AG04450 (cell line): ENCODE measurements at regions of chr5 and their contacts with region 1.

Region 1: DNA sequence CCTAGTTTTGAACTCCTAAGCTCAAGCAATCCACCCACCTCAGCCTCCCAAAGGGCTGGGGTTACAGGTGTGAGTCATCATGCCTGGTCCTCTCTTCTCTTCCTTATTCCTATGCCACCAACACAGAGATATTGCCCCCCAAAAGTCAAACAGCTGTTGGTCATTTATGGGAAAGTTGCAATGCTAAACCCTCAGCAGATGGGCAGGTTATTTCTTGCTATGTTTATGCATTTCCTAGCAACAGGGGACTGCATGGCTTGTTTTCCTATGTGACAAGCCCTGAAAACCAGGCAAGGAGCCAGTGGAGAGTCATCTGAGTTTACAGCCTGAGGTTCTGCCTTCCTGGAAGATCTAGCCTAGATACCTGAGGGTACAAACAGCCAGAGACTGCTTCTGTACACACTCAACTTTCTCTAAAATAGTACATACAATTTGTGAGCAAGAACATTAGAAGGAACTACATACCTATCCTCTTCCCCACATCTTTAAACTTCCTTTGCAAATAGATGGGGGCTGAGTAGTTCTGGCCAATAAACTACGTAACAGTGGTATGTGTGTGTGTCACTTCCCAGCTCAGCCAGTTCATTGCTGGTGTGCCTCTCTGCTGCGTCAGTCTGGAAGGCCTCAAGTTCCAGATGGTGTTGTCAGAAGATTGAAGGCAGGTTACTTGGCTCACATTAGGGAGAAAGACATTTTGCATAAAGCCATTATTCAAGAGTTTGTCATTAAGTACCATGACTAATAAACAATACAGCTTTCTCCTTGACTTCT is 65.4 kb downstream of the CSNK1A1 start:
- DNase-seq: peak; percentile 98
- H3K4me3 ChIP-seq: no peak overlapping the region
- H3K27ac ChIP-seq: peak overlapping the region; percentile 99
- H3K27me3 ChIP-seq: no peaks in the 10 kb centered on the region
- CTCF ChIP-seq: no peak

Region 2: DNA sequence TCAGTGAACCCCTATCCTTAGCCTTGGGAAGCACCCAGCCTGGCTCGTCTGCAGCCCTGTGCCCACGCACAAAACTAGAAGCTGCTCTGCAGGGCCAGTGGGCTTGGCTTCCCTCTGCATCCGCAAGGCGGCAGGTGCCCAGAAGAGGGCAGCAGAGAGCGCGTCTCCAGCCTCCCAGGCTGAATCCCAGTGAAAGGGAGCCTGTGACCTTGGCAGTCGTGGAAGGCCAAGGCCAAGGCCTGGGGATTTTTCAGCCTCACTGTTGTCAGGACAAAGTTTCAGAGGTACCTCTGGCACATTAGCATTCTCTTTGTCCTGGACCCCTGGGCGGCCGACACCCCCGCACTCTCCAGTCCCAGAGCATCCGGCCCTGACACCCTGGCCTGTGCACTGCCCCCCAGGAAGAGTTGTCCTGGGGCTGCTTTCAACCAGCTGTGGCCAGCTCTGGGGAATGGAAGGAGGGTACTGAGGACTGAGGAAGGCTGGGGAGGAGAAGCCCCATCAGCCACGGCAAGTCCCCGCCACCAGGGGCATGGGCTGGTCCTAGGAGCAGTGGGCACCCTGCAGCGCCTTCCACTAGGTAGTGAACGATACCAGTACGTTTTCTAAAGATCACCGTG is 43.2 kb before region 1 on chr5:
- CTCF ChIA-PET with region 1: interaction called, 5 read pairs
- POLR2A ChIA-PET with region 1: interaction called, 16 read pairs
- DNase-seq: peak; percentile 44
- H3K4me3 ChIP-seq: no peak overlapping the region
- H3K27ac ChIP-seq: peak overlapping the region; percentile 0
- H3K27me3 ChIP-seq: peaks cover 2% of the 10 kb centered on the region
- CTCF ChIP-seq: peak; percentile 93

Region 3: DNA sequence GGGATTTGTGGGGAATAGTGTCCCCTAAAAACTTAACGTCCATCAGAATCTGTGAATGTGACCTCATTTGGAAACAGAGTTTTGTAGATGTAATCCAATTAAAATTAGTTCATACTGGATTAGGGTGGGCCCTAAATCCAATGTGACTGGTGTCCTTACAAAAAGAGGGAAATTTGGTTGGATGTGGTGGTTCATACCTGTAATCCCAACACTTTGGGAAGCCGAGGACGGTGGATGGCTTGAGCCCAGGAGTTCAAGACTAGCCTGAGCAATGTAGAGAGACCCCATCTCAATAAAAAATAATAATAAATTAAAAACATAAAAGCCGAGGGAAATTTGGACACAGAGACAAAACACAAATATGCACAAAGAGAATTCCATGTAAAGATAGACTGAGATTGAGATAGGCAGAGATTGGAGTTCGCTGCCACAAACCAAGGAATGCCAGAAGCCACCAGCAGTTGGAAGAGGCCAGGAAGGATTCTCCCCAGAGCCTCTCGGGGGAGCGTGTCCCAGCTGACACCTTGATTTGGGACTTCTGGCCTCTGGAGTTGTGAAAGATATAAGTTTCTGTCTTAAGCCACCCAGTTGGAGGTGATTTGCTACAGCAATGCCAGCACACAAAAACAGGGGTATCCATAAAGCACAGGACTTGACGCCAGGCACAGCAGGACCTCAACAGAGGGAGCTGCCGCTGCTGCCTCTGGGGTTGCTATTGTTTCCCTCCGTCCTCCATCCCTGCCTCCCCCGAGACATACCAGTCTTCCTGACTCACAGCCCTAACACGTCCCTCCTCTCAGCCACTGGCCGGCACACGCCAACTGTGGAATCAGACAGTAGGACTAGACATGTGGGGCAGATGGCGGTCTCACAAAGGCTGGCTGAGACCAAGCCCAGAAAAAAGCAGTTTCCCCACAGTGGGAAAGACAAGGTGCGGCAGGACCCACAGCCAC is 32.9 kb before region 1 on chr5:
- CTCF ChIA-PET with region 1: no interaction called
- POLR2A ChIA-PET with region 1: interaction called, 11 read pairs
- DNase-seq: peak; percentile 78
- H3K4me3 ChIP-seq: no peak overlapping the region
- H3K27ac ChIP-seq: peak overlapping the region; percentile 89
- H3K27me3 ChIP-seq: no peaks in the 10 kb centered on the region
- CTCF ChIP-seq: peak; percentile 20; the same call in 1 of the 2 replicates

Region 4: DNA sequence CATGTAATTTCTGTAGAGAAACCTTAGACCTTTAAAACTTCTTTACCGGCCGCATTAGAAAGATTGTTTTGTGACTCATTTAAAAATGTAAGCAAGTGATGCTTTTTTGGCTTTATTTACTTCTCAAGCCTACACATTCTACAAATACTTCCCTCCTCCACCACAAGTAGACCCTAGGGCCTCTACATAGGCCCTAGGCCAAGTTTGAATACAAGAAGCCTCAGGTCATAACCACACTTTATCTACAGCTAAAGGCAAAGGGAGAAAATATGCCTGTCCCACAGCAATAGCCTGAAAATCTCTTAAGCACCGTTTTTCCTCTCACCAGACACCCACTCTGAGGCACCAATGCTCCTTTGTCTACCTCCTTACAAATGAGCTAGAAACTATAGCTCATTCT is 11.5 kb after region 1 on chr5:
- CTCF ChIA-PET with region 1: no interaction called
- POLR2A ChIA-PET with region 1: interaction called, 11 read pairs
- DNase-seq: peak; percentile 91
- H3K4me3 ChIP-seq: no peak overlapping the region
- H3K27ac ChIP-seq: peak overlapping the region; percentile 85
- H3K27me3 ChIP-seq: no peaks in the 10 kb centered on the region
- CTCF ChIP-seq: no peak; the same call in 1 of the 2 replicates

Region 5: DNA sequence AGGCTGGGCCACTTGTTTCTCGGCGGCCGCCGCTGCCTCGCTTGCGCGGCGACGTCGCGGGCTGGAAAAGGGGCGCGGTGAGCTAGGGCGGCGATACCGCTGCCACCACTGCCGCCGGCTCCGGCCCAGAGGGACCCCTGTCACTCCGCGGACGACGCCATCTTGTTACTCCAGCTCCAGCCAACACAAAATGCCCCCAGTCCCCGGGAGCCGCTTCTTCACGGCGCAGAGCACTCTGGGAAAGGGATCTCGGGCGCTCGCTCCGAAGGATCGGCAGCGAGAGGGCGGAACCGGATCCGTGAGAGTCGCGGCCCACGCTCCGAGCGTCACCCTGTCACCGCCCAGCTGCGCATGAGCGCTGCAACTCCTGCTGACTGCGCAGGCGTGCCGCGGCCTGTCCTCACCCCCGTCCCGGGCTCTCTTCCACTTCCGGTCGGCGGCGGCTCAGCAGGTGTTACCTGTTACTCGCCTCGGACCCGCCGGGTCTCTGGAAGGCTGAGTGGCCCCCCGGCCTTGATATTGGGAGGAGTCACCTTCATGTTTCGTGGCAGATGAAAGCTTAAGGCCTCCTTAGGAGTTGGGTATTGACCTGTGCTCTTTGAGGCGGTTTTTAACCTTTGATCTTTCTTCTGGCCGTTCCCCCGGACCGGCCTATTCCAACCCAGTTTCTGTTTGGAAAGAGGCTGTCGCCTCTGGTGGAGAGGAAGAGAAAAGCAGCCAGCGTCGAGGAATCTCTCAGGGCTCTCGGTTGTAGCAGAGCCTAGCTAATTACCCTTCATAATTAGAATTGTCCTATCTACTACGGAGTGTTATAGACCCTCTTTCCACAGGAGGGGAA is 65.6 kb after region 1 on chr5 and contains the start of gene CSNK1A1:
- CTCF ChIA-PET with region 1: interaction called, 3 read pairs
- POLR2A ChIA-PET with region 1: interaction called, 15 read pairs
- DNase-seq: peak; percentile 97
- H3K4me3 ChIP-seq: peak within 1 kb of the TSS; percentile 96
- H3K27ac ChIP-seq: peak within 1 kb of the TSS; percentile 91
- H3K27me3 ChIP-seq: no peaks in the 10 kb centered on the region
- CTCF ChIP-seq: peak; percentile 86
- polyA plus RNA-seq, gene CSNK1A1: 260 and 329 TPM in 2 replicates

Region 6: DNA sequence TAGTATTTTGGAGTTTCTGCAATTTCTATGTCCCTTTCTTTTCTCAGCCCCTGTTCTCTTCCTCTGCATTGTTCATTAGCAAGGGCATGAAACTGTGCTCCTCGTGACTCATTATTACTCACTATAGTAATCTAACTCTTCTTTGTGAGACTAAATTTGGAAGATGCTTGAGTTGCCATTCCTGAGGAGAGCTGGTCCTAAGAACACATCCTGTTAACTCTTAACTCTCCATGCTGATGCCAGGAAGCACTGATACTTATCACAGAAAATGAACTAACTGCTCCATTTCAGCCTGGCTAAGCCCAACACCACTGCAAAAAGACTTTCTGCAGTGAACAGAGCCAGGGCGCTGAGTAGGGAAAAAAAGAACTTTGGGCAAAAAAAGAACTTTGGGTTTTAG is 76.0 kb after region 1 on chr5:
- CTCF ChIA-PET with region 1: no interaction called
- POLR2A ChIA-PET with region 1: interaction called, 19 read pairs
- DNase-seq: peak; percentile 84
- H3K4me3 ChIP-seq: no peak overlapping the region; the same call in 1 of the 2 replicates
- H3K27ac ChIP-seq: peak overlapping the region; percentile 90
- H3K27me3 ChIP-seq: no peaks in the 10 kb centered on the region
- CTCF ChIP-seq: no peak

Region 7: GRCh38 chr5:149576021-149576420 is 90.2 kb after region 1 on chr5:
- CTCF ChIA-PET with region 1: no interaction called
- POLR2A ChIA-PET with region 1: no interaction called
- DNase-seq: no peak
- H3K4me3 ChIP-seq: no peak overlapping the region
- H3K27ac ChIP-seq: no peak overlapping the region
- H3K27me3 ChIP-seq: no peaks in the 10 kb centered on the region
- CTCF ChIP-seq: no peak